BJ (cell line): ENCODE measurements at regions of chr7 and their contacts with region 1.

Region 1: DNA sequence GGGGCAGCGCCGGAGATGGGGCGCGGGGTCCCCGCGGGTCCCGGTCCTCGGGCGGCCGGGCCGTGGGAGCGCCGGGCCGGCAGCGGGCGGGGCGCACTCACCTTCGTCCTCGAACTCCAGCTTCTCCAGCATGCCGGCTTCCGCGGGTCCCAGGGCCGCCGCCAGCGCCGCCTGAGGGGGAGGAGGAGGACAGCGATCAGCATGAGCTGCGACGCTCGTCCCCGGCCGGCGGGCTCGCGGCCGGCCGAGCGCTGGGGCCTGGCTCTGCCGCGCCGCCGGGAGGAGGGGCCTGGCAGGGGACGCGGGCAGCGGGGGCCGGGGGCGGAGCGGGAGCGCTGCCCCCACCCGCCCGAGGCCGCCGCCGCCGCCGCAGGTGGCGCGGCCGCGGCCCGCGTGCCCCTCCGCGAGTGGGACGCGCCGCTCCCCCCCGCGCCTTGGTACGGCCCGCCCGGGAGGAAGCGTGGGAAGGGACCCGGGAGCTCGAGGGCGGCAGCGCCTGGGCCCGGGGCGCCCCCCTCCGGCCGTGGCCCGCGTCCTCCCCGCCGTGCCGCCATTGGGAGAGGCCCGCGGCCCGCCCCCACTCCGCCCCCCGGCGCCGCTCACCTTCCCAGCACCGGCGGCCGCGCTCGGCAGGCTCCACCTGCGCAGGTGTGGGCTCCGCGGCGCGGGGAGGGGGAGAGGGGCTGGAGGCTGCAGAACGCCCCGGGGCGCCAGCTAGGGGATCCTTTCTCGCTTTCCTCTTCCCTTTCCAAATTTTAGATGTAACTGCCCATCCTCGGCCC is 112.5 kb upstream of the RHEB start:
- DNase-seq: no peak
- H3K4me3 ChIP-seq: peak overlapping the region; percentile 73
- H3K27me3 ChIP-seq: no peaks in the 10 kb centered on the region
- CTCF ChIP-seq: no peak

Region 2: GRCh38 chr7:151198945-151199848 is 433.0 kb before region 1 on chr7:
- CTCF ChIA-PET with region 1: no interaction called
- POLR2A ChIA-PET with region 1: no interaction called
- DNase-seq: no peak
- H3K4me3 ChIP-seq: no peak overlapping the region
- H3K27me3 ChIP-seq: peaks cover 45% of the 10 kb centered on the region
- CTCF ChIP-seq: no peak

Region 3: DNA sequence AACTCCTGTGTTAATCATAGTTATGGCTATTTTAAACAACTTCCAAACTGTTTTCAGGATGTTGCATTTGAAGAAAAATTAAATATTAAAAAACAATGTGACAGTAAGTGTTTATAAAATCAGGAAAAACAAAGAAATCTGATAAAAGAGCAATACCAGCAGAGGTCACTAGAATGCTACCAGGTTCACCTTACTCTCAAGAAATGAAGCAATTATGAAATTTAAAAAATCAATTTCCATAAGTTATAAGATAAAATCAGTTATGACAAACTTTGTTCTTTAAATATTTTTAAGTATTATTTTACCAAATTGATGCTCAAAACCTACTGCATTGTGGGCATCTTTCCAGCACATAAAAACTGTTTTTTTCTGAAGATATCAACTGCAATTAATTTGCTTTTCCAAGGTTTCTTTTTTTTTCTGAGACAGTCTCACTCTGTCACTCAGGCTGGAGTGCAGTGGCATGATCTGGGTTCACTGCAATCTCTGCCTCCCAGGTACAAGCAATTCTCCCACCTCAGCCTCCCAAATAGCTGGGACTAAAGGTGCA is 61.7 kb before region 1 on chr7:
- CTCF ChIA-PET with region 1: interaction called, 17 read pairs
- POLR2A ChIA-PET with region 1: no interaction called
- DNase-seq: no peak
- H3K4me3 ChIP-seq: no peak overlapping the region
- H3K27me3 ChIP-seq: no peaks in the 10 kb centered on the region
- CTCF ChIP-seq: peak; percentile 50

Region 4: DNA sequence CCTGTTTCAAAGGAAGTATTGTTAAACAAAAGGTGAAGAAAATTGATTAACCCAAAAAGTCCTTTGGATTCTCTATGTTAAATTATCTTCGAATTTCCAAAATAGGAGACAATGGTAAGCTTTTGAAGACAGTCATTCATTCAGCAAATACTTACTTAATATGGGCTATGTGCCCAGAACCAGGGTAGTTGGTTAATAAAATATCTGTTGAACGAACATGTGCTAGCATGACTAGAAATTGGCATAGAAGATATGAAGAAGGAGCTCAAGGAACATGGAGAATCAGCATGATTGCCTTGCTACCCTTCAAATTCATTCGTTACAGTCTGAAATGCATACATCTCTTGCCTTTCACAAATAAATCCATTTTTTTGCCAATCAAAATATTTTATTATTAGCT is 10.6 kb after region 1 on chr7:
- CTCF ChIA-PET with region 1: interaction called, 11 read pairs
- POLR2A ChIA-PET with region 1: no interaction called
- DNase-seq: no peak
- H3K4me3 ChIP-seq: no peak overlapping the region
- H3K27me3 ChIP-seq: no peaks in the 10 kb centered on the region
- CTCF ChIP-seq: no peak

Region 5: DNA sequence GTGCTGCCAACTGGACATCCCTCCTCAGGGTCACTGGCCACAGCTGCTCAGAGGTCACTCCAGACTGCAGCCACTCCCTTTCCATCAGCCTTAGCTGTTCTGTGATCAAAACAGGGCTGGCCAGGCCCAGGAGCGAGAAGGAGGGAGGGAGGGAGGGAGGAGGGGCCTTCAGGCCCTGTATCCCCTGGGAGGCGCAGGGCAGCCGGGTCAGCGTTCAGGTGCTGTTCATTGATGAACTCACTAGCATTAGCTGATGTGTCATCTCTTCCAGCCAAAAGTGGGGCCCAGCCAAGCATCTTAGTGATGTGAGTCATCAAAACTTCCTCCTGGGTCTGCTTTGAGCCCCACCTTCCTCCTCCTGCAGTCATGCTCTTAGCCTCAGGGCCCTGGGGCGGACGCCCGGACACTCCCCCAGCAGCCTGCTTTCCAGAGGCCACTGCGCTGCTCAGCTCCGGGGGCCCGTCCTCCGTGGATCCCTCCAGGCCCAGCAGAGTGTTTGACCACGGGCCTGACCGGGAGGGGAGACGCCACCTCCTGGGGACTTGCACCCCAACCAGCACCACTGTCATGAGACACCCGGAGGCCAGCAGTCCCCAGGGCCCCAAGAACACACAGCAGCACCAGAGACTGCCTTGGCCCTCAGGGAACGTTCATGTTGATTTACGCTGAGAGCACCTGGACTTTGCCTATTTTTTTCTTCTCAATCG is 95.6 kb after region 1 on chr7:
- CTCF ChIA-PET with region 1: interaction called, 17 read pairs
- POLR2A ChIA-PET with region 1: no interaction called
- DNase-seq: peak; percentile 92
- H3K4me3 ChIP-seq: no peak overlapping the region
- H3K27me3 ChIP-seq: no peaks in the 10 kb centered on the region
- CTCF ChIP-seq: no peak

Region 6: GRCh38 chr7:151754142-151754590 is 122.0 kb after region 1 on chr7:
- CTCF ChIA-PET with region 1: interaction called, 29 read pairs
- POLR2A ChIA-PET with region 1: no interaction called
- DNase-seq: peak; percentile 91
- H3K4me3 ChIP-seq: no peak overlapping the region
- H3K27me3 ChIP-seq: no peaks in the 10 kb centered on the region
- CTCF ChIP-seq: peak; percentile 100

Region 7: GRCh38 chr7:151782598-151783448 is 150.7 kb after region 1 on chr7:
- CTCF ChIA-PET with region 1: no interaction called
- POLR2A ChIA-PET with region 1: no interaction called
- DNase-seq: no peak
- H3K4me3 ChIP-seq: peak overlapping the region; percentile 21; the same call in 1 of the 2 replicates
- H3K27me3 ChIP-seq: peaks cover 14% of the 10 kb centered on the region
- CTCF ChIP-seq: peak; percentile 89

Region 8: DNA sequence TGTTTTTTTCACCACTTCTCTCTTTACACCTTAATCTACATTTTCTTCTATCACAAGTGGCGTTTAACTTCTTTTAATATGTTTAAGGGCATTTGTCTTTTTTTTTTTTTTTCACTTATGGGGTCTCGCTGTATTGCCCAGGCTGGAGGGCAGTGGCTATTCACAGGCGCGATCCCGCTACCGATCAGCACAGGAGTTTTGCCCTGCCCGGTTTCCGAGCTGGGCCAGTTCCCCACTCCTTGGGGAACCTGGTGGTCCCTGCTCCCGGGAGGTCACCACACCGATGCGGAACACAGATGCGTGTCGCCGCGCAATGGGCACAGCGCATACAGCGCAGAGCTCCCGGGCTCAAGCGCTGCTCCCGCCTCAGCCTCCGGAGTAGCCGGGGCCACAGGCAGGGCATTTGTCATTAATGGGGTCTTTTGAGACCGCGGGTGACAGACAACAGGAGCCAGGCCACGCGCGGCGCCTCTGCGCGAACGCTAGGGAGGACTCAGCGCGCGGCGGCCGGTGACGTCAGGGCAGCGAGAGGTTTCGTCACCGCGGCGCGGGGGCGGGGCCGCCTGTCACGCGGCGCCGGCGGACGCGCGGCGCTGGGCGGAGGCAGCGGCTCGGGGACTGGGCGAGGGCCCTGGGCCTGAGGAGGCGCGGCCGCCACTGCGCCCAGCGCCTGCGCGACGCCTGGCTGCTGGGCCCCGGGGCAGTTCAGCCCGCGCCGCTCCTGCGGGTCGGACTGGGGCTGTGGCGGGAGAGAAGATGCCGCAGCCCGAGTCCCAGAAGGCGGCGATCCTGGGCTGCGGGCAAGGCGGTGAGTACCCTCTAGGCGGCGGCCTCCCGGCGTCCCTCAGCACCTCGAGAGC is 393.1 kb after region 1 on chr7 and contains the start of gene GALNT11:
- CTCF ChIA-PET with region 1: no interaction called
- POLR2A ChIA-PET with region 1: no interaction called
- DNase-seq: peak; percentile 20
- H3K4me3 ChIP-seq: peak within 1 kb of the TSS; percentile 73
- H3K27me3 ChIP-seq: no peaks in the 10 kb centered on the region
- CTCF ChIP-seq: no peak
- polyA plus RNA-seq, gene GALNT11: 18.7 and 28.8 TPM in 2 replicates